Activated CD4-positive, alpha-beta memory T cell treated with anti-CD3 and anti-CD28 coated beads for 36 hours (primary cell): ENCODE measurements at regions of chr2 and their contacts with region 1.

Region 1: GRCh38 chr2:230225486-230225885 is at the start of gene SP140:
- DNase-seq: peak; percentile 92
- H3K4me3 Mint-ChIP-seq: peak within 1 kb of the TSS; percentile 89
- H3K27ac Mint-ChIP-seq: peak within 1 kb of the TSS; percentile 97
- H3K4me1 Mint-ChIP-seq: peaks cover 58% of the 10 kb centered on the region
- H3K27me3 Mint-ChIP-seq: no peaks in the 10 kb centered on the region
- total RNA-seq, gene SP140: 150 to 151 TPM

Region 2: GRCh38 chr2:229921892-229922445 is 303.5 kb before region 1 on chr2 and contains the start of gene TRIP12:
- CTCF ChIA-PET with region 1: no interaction called
- POLR2A ChIA-PET with region 1: no interaction called
- intact Hi-C with region 1: loop called (anchors 5 kb)
- DNase-seq: peak; percentile 91
- H3K4me3 Mint-ChIP-seq: peak within 1 kb of the TSS; percentile 95
- H3K27ac Mint-ChIP-seq: peak within 1 kb of the TSS; percentile 99
- H3K4me1 Mint-ChIP-seq: peaks cover 29% of the 10 kb centered on the region
- H3K27me3 Mint-ChIP-seq: no peaks in the 10 kb centered on the region
- total RNA-seq, gene TRIP12: 226 to 253 TPM

Region 3: GRCh38 chr2:230007931-230008707 is 217.4 kb before region 1 on chr2:
- CTCF ChIA-PET with region 1: no interaction called
- POLR2A ChIA-PET with region 1: no interaction called
- intact Hi-C with region 1: no loop called
- DNase-seq: peak; percentile 90
- H3K4me3 Mint-ChIP-seq: no peak overlapping the region
- H3K27ac Mint-ChIP-seq: no peak overlapping the region
- H3K4me1 Mint-ChIP-seq: peaks cover 5% of the 10 kb centered on the region
- H3K27me3 Mint-ChIP-seq: no peaks in the 10 kb centered on the region

Region 4: GRCh38 chr2:230160112-230160660 is 65.3 kb before region 1 on chr2:
- CTCF ChIA-PET with region 1: no interaction called
- POLR2A ChIA-PET with region 1: no interaction called
- intact Hi-C with region 1: no loop called
- DNase-seq: peak; percentile 69
- H3K4me3 Mint-ChIP-seq: no peak overlapping the region
- H3K27ac Mint-ChIP-seq: no peak overlapping the region
- H3K4me1 Mint-ChIP-seq: peaks cover 7% of the 10 kb centered on the region
- H3K27me3 Mint-ChIP-seq: no peaks in the 10 kb centered on the region

Region 5: GRCh38 chr2:230254152-230254881 is 28.8 kb after region 1 on chr2:
- CTCF ChIA-PET with region 1: interaction called, 3 read pairs
- POLR2A ChIA-PET with region 1: interaction called, 12 read pairs
- intact Hi-C with region 1: no loop called
- DNase-seq: peak; percentile 80
- H3K4me3 Mint-ChIP-seq: no peak overlapping the region
- H3K27ac Mint-ChIP-seq: no peak overlapping the region
- H3K4me1 Mint-ChIP-seq: peaks cover 18% of the 10 kb centered on the region
- H3K27me3 Mint-ChIP-seq: no peaks in the 10 kb centered on the region

Region 6: GRCh38 chr2:230347659-230348305 is 122.3 kb after region 1 on chr2:
- CTCF ChIA-PET with region 1: interaction called, 4 read pairs
- POLR2A ChIA-PET with region 1: no interaction called
- intact Hi-C with region 1: loop called (anchors 5 kb)
- DNase-seq: peak; percentile 70
- H3K4me3 Mint-ChIP-seq: peak overlapping the region; percentile 47
- H3K27ac Mint-ChIP-seq: peak overlapping the region; percentile 92
- H3K4me1 Mint-ChIP-seq: peaks cover 80% of the 10 kb centered on the region
- H3K27me3 Mint-ChIP-seq: no peaks in the 10 kb centered on the region

Region 7: DNA sequence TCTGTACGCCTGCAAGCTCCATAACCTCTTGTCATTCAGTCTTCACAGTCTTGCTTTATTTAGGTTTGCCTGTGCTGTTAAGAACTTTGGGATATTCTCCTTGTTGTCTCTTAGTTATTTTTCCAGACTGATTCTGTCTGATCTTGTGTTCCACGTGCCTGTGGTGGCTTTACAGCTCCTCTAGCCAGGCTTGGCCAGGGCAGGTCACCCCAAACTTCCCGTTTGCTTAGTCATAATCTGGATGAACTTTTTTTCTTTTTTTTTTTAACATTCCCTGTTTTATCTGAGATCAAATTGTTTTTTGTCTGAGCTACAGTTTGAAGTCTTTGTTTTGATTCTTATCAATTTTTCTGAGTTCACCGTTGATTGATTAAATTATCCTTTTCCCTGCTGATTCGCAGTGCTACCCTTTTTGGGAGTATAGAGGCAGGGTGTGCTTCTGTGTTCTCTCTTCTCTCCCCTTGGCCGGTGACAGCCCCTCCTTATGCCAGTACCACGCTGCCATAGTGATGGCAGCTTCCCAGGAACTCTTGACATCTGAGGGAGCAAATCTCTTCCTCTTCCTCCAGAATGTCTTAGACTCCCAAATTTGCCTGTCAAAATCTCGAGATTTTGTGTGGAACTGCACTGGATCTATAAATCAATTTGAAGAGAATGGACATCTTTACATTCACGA is 193.0 kb after region 1 on chr2:
- CTCF ChIA-PET with region 1: no interaction called
- POLR2A ChIA-PET with region 1: no interaction called
- intact Hi-C with region 1: loop called (anchors 2 kb)
- DNase-seq: no peak
- H3K4me3 Mint-ChIP-seq: peak overlapping the region; percentile 93
- H3K27ac Mint-ChIP-seq: peak overlapping the region; percentile 60
- H3K4me1 Mint-ChIP-seq: peaks cover 67% of the 10 kb centered on the region
- H3K27me3 Mint-ChIP-seq: no peaks in the 10 kb centered on the region

Region 8: GRCh38 chr2:230712443-230713330 is 487.2 kb after region 1 on chr2 and contains the start of gene CAB39:
- CTCF ChIA-PET with region 1: interaction called, 3 read pairs
- POLR2A ChIA-PET with region 1: no interaction called
- intact Hi-C with region 1: loop called (anchors 5 kb)
- DNase-seq: peak; percentile 91
- H3K4me3 Mint-ChIP-seq: peak within 1 kb of the TSS; percentile 93
- H3K27ac Mint-ChIP-seq: peak within 1 kb of the TSS; percentile 91
- H3K4me1 Mint-ChIP-seq: peaks cover 41% of the 10 kb centered on the region
- H3K27me3 Mint-ChIP-seq: no peaks in the 10 kb centered on the region
- total RNA-seq, gene CAB39: 128 to 129 TPM